Activated T-helper 1 cell treated with anti-CD3 and anti-CD28 coated beads, Interleukin-12 subunit alpha, Interleukin-12 subunit beta, Interleukin-2, Interleukin-4 antibody, amounts not matched to agents 30 ng/mL and 10 ng/mL and 1 ng/mL, durations not matched to agents 14 hours and 24 hours and 36 hours (primary cell): ENCODE measurements at regions of chr12 and their contacts with region 1.

Region 1: DNA sequence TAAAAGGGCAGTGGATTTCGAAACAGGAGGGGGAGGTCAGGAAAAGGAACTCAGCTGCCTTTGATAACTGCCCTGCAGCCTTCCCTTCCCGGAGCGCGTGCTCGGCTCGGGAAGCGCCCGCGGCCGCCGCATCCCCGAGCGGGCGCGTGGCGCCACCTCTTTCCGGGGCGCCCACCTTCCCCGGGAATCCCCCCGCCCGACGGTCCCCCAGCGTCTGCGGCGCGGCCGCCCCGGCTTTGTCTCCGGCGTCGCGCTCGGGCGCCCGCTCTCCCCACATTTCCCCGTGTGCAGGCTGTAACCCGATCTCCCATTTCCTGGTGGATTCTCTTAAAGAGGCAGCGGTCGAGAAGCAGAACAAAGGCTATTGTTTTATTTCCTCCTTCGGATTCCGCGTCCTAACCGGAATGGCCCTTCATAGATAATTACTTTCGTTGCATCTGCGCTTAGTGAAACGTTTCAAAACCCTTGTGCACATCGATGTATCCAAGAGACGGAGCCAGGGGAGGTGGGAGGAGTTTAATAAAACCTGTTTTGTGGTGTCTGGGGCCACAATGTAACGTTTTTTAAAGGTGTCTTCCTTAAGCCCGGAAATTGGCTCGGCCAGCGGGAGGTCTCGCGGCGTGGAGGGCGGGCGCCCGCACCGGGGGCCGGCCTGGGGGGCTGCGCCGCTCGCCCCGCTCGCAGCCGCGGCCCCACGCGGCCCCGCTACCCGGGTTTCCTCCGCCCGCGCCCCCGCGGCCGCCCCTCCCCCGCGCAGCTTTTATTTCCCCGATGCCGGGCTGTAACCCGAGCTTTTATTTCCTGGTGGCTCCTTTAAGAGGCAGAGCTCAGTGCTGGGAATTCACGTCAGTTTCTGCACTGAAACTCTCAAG is at the start of gene ETV6:
- DNase-seq: peak; percentile 74
- H3K4me3 Mint-ChIP-seq: peak within 1 kb of the TSS; percentile 95
- H3K27ac Mint-ChIP-seq: peak within 1 kb of the TSS; percentile 99
- H3K4me1 Mint-ChIP-seq: peaks cover 29% of the 10 kb centered on the region
- H3K27me3 Mint-ChIP-seq: peaks cover 3% of the 10 kb centered on the region
- total RNA-seq, gene ETV6: 117 and 131 TPM in 2 replicates

Region 2: GRCh38 chr12:10721651-10722501 is 927.2 kb before region 1 on chr12:
- intact Hi-C with region 1: loop called (anchors 10 kb)
- DNase-seq: peak; percentile 53
- H3K4me3 Mint-ChIP-seq: peak overlapping the region; percentile 96
- H3K27ac Mint-ChIP-seq: peak overlapping the region; percentile 96
- H3K4me1 Mint-ChIP-seq: peaks cover 60% of the 10 kb centered on the region
- H3K27me3 Mint-ChIP-seq: peaks cover 34% of the 10 kb centered on the region

Region 3: GRCh38 chr12:11615481-11615880 is 33.6 kb before region 1 on chr12:
- intact Hi-C with region 1: no loop called
- DNase-seq: no peak
- H3K4me3 Mint-ChIP-seq: no peak overlapping the region
- H3K27ac Mint-ChIP-seq: no peak overlapping the region
- H3K4me1 Mint-ChIP-seq: no peaks in the 10 kb centered on the region
- H3K27me3 Mint-ChIP-seq: no peaks in the 10 kb centered on the region

Region 4: DNA sequence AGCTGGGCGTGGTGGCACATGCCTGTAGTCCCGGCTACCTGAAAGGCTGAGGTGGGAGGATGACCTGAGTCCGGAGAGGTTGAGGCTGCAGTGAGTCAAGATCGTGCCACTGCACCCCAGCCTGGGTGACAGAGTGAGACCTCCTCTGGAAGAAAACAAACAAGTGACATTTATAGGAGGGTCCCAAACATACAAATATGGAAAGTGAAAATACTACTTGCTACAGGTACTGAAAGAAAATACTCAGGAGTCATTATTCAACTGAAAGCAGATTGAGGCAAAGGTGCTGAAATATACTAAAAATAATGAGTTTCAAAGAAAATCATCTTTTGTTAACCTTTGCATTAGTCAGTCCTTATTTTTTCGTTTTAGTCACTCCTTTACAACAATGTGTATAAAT is 53.9 kb after region 1 on chr12:
- intact Hi-C with region 1: loop called (anchors 2 kb)
- DNase-seq: no peak
- H3K4me3 Mint-ChIP-seq: peak overlapping the region; percentile 8
- H3K27ac Mint-ChIP-seq: peak overlapping the region; percentile 78
- H3K4me1 Mint-ChIP-seq: peaks cover 60% of the 10 kb centered on the region
- H3K27me3 Mint-ChIP-seq: no peaks in the 10 kb centered on the region

Region 5: DNA sequence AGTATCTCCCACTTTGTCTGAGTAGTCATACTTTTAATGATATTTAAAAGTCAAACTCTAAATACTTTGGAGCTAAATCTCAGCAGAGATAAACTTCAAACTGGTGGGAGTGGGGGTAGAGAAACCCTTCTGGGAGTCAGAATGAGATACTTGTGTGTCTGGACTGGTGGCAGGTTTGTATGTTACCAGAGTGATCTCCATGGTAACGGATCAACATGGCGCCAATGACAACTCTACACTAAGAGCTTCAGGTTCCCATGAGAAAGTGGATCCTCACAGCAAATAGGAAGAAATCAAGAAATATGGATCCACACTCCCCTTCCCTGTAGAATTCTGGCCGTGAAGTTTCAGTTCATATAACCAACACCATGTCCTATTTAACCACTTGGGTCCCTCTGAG is 122.3 kb after region 1 on chr12:
- intact Hi-C with region 1: loop called (anchors 1 kb)
- DNase-seq: no peak
- H3K4me3 Mint-ChIP-seq: no peak overlapping the region
- H3K27ac Mint-ChIP-seq: peak overlapping the region; percentile 98
- H3K4me1 Mint-ChIP-seq: peaks cover 96% of the 10 kb centered on the region
- H3K27me3 Mint-ChIP-seq: no peaks in the 10 kb centered on the region

Region 6: DNA sequence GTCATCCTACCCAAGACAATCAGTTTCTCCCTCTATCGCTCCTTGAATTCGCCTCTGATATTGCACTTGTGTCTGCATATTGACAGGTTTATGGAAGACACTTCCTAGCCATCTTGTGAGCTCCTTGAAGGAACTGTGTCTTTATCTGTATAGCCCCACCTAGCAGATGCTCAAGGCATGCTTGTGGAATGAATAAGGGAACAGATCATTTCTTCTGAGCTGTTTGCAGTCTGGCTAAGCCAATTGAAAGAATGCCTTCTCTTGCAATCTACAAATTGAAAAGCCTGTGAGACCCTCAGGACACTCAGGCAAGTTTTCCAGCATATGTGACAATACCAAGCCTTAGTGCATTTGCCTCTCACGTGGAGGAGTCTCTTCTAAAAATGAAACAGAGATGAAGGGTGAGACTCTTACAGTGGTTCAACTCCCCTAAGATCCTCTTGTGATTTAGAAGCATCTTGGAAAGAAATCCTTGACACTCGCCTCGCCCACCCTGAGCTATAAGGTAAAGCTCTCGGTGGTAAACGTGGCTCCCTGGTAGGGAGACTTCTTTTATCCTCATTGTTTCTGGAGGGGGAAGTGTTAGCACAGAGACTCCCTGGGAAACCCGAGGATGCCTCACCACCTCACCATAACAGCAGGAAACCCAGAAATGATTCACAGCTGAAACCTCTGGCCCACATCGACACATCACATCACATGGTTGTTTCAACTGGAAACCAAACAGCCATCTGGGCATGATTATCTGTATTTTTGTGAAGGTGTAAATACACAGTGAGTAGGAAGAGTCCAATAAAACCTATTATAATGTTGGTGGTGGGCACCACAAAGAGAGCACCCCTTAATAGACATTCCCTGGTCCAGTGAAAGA is 309.4 kb after region 1 on chr12:
- intact Hi-C with region 1: loop called (anchors 2 kb)
- DNase-seq: peak; percentile 55
- H3K4me3 Mint-ChIP-seq: peak overlapping the region; percentile 29
- H3K27ac Mint-ChIP-seq: peak overlapping the region; percentile 89
- H3K4me1 Mint-ChIP-seq: peaks cover 76% of the 10 kb centered on the region
- H3K27me3 Mint-ChIP-seq: no peaks in the 10 kb centered on the region

Region 7: GRCh38 chr12:12171991-12172521 is 523.0 kb after region 1 on chr12:
- intact Hi-C with region 1: loop called (anchors 5 kb)
- DNase-seq: peak; percentile 12
- H3K4me3 Mint-ChIP-seq: no peak overlapping the region
- H3K27ac Mint-ChIP-seq: peak overlapping the region; percentile 42
- H3K4me1 Mint-ChIP-seq: peaks cover 15% of the 10 kb centered on the region
- H3K27me3 Mint-ChIP-seq: peaks cover 60% of the 10 kb centered on the region